Activated CD4-positive, alpha-beta memory T cell treated with anti-CD3 and anti-CD28 coated beads, Interleukin-2, amount 10 ng/mL, durations not matched to agents 7 days and 5 days (primary cell): ENCODE measurements at regions of chr3 and their contacts with region 1.

Region 1: GRCh38 chr3:143775459-143775858 is 72.8 kb downstream of the SLC9A9 start:
- DNase-seq: no peak
- H3K4me3 Mint-ChIP-seq: no peak overlapping the region
- H3K27ac Mint-ChIP-seq: no peak overlapping the region
- H3K4me1 Mint-ChIP-seq: peaks cover 1% of the 10 kb centered on the region
- H3K27me3 Mint-ChIP-seq: no peaks in the 10 kb centered on the region

Region 2: GRCh38 chr3:143847787-143848631 is 72.5 kb after region 1 on chr3 and contains the start of gene SLC9A9:
- CTCF ChIA-PET with region 1: interaction called, 10 read pairs
- POLR2A ChIA-PET with region 1: no interaction called
- DNase-seq: peak; percentile 53
- H3K4me3 Mint-ChIP-seq: peak within 1 kb of the TSS; percentile 95
- H3K27ac Mint-ChIP-seq: peak within 1 kb of the TSS; percentile 93
- H3K4me1 Mint-ChIP-seq: peaks cover 53% of the 10 kb centered on the region
- H3K27me3 Mint-ChIP-seq: no peaks in the 10 kb centered on the region
- total RNA-seq, gene SLC9A9: 16.9 to 18.5 TPM

Region 3: GRCh38 chr3:143950810-143951209 is 175.4 kb after region 1 on chr3:
- CTCF ChIA-PET with region 1: interaction called, 10 read pairs
- POLR2A ChIA-PET with region 1: no interaction called
- DNase-seq: no peak
- H3K4me3 Mint-ChIP-seq: no peak overlapping the region
- H3K27ac Mint-ChIP-seq: no peak overlapping the region
- H3K4me1 Mint-ChIP-seq: no peaks in the 10 kb centered on the region
- H3K27me3 Mint-ChIP-seq: peaks cover 13% of the 10 kb centered on the region